ENCODE measurements at regions of chr20 and their contacts with region 1.

Region 1: DNA sequence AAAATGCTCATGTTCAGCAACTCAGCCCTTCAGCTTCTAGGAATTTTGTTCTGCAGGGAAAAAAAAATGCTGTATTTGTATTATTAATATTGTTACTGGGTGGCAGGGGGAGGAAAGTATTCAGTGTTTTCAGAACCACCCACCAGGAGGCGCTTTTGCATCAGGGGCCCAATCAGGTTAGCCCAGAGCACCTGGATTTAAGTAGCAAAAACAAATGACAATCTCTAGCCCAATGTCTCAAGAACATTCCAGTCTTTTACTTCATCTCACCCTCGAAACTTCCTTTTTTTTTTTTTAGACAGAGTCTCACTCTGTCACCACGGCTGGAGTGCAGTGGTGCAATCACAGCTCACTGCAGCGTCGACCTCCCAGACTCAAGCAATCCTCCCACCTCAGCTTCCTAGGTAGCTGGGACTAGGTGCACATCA is 635 bp upstream of the C20orf203 start:
- DNase-seq: peak; percentile 85
- ATAC-seq: peak; percentile 54
- H3K4me3 Mint-ChIP-seq: no peak overlapping the region
- H3K27ac Mint-ChIP-seq: no peak overlapping the region
- H3K4me1 Mint-ChIP-seq: peaks cover 54% of the 10 kb centered on the region
- H3K27me3 Mint-ChIP-seq: no peaks in the 10 kb centered on the region

Region 2: GRCh38 chr20:32227744-32228688 is 446.4 kb before region 1 on chr20:
- CTCF ChIA-PET with region 1: no interaction called
- POLR2A ChIA-PET with region 1: no interaction called
- DNase-seq: no peak
- ATAC-seq: no peak
- H3K4me3 Mint-ChIP-seq: no peak overlapping the region
- H3K27ac Mint-ChIP-seq: no peak overlapping the region
- H3K4me1 Mint-ChIP-seq: peaks cover 19% of the 10 kb centered on the region
- H3K27me3 Mint-ChIP-seq: no peaks in the 10 kb centered on the region

Region 3: GRCh38 chr20:32535953-32536823 is 138.2 kb before region 1 on chr20:
- CTCF ChIA-PET with region 1: interaction called, 14 read pairs
- POLR2A ChIA-PET with region 1: interaction called, 3 read pairs
- DNase-seq: peak; percentile 92
- ATAC-seq: peak; percentile 52
- H3K4me3 Mint-ChIP-seq: peak overlapping the region; percentile 77
- H3K27ac Mint-ChIP-seq: peak overlapping the region; percentile 94
- H3K4me1 Mint-ChIP-seq: peaks cover 82% of the 10 kb centered on the region
- H3K27me3 Mint-ChIP-seq: no peaks in the 10 kb centered on the region

Region 4: GRCh38 chr20:32743237-32744112 is 69.1 kb after region 1 on chr20 and contains the start of gene COMMD7:
- CTCF ChIA-PET with region 1: interaction called, 40 read pairs
- POLR2A ChIA-PET with region 1: interaction called, 9 read pairs
- DNase-seq: peak; percentile 86
- ATAC-seq: peak; percentile 83
- H3K4me3 Mint-ChIP-seq: peak within 1 kb of the TSS; percentile 98
- H3K27ac Mint-ChIP-seq: peak within 1 kb of the TSS; percentile 98
- H3K4me1 Mint-ChIP-seq: peaks cover 45% of the 10 kb centered on the region
- H3K27me3 Mint-ChIP-seq: no peaks in the 10 kb centered on the region
- total RNA-seq, gene COMMD7: 65.5 to 68.4 TPM

Region 5: GRCh38 chr20:32772046-32772445 is 97.7 kb after region 1 on chr20:
- CTCF ChIA-PET with region 1: interaction called, 370 read pairs
- POLR2A ChIA-PET with region 1: interaction called, 36 read pairs
- DNase-seq: no peak
- ATAC-seq: no peak
- H3K4me3 Mint-ChIP-seq: no peak overlapping the region
- H3K27ac Mint-ChIP-seq: no peak overlapping the region
- H3K4me1 Mint-ChIP-seq: peaks cover 46% of the 10 kb centered on the region
- H3K27me3 Mint-ChIP-seq: no peaks in the 10 kb centered on the region

Region 6: DNA sequence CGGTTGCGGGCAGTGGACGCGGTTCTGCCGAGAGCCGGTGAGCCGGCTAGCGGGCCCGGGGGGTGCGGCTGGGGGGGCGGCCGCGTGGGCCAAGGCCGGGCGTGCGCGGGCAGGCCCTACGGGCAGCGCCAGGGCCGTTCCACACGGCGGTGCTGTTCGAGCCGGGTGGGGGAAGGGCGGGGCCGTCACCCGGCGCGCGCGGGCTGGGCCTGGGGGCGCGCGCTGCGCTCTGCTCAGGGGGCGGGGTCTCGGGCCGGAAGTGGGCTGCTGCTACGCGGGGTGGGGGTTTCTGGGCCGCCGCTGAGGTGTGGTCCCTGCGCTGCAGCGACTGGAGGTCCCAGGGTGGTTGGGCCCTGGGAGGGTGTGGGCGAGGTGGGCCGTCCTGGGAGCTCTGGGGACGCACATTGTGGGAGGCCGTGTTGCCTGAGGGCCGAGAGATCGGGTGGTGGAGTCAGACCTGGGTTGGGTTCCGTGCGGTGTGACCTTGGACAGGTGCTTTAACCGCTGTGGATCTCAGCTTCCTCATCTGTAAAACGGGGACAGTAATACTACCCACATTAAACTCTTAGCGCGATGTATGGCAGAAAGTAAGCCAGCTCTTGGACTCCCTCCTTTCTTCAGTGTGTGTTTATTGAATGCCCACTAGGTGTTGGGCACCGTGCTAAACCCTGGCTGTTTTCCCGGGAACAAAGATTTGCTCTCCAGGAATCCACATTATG is 145.8 kb after region 1 on chr20:
- CTCF ChIA-PET with region 1: interaction called, 11 read pairs
- POLR2A ChIA-PET with region 1: interaction called, 3 read pairs
- DNase-seq: peak; percentile 84
- ATAC-seq: peak; percentile 83
- H3K4me3 Mint-ChIP-seq: peak overlapping the region; percentile 96
- H3K27ac Mint-ChIP-seq: peak overlapping the region; percentile 99
- H3K4me1 Mint-ChIP-seq: peaks cover 38% of the 10 kb centered on the region
- H3K27me3 Mint-ChIP-seq: no peaks in the 10 kb centered on the region

Measured in activated CD8-positive, alpha-beta T cell treated with anti-CD3 and anti-CD28 coated beads, Interleukin-2, amount 10 ng/mL, durations not matched to agents 7 days and 5 days (primary cell).